ENCODE measurements at regions of chr2 and their contacts with region 1.

Region 1: GRCh38 chr2:27428213-27428977 is at the start of gene NRBP1:
- DNase-seq: peak; percentile 89
- H3K4me3 ChIP-seq: peak within 1 kb of the TSS; percentile 86 to 100 (median 92)
- H3K27ac ChIP-seq: peak within 1 kb of the TSS; percentile 86
- H3K4me1 ChIP-seq: peaks cover 14% of the 10 kb centered on the region
- H3K27me3 ChIP-seq: no peaks in the 10 kb centered on the region
- CTCF ChIP-seq: peak in 1 of 2 donors; percentile 5
- total RNA-seq, gene NRBP1: 92.9 to 93.4 TPM

Region 2: GRCh38 chr2:27380626-27381545 is 47.5 kb before region 1 on chr2 and contains the start of gene ZNF513:
- CTCF ChIA-PET with region 1: no interaction called
- dilution Hi-C with region 1: no loop called
- in situ Hi-C with region 1: no loop called
- intact Hi-C with region 1: no loop called
- DNase-seq: peak; percentile 96
- H3K4me3 ChIP-seq: peak within 1 kb of the TSS; percentile 66 to 87 (median 75)
- H3K27ac ChIP-seq: peak within 1 kb of the TSS; percentile 86
- H3K4me1 ChIP-seq: peaks cover 33% of the 10 kb centered on the region
- H3K27me3 ChIP-seq: no peaks in the 10 kb centered on the region
- CTCF ChIP-seq: no peak
- total RNA-seq, gene ZNF513: 10.2 to 14.9 TPM

Region 3: DNA sequence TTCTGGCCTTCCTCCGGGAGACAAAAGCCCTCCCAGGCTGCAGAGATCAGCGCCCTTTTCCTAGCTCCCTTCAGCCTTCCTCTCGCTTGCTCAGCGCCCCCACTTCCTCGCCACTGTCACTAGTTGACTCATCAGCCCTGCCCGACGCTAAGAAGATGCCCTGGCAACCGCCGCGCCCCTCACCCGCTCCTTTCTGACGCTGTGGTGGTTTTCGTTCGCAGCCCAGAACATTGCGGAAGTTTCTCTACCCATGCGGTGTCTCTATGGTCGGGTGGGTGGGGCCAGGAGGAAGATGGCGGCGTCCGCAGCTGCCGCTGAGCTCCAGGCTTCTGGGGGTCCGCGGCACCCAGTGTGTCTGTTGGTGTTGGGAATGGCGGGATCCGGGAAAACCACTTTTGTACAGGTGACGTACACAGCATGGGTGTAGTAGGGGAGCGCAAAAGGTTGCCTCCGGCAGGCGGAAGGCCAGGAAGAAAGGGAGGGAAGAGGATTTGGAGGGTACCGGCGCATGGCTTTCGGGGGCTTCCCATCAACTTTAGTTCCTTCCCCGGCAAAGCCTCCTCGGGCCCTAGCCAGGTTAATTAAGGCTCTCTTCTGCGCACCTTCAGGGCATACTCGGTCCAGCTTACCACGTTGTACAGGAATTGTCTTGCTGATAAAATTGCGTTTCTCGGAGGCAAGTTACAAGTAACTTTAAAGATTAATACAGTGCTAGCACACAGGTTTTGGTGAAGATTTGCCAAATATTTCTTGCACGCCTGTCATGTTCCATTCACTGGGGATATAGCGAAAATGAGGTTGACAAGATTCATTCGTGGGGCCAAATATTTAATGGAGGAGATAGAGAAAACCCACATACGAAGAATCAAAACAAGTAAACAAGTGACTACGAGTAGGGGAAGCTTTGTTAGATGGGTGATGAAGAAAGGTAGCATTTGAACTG is 200.6 kb after region 1 on chr2 and contains the starts of genes CCDC121 and GPN1:
- CTCF ChIA-PET with region 1: interaction called, 15 read pairs
- dilution Hi-C with region 1: no loop called
- in situ Hi-C with region 1: loop called (anchors 25 kb)
- intact Hi-C with region 1: loop called (anchors 2 kb)
- DNase-seq: peak; percentile 93
- H3K4me3 ChIP-seq: peak within 1 kb of the TSS; percentile 56 to 90 (median 70)
- H3K27ac ChIP-seq: peak within 1 kb of the TSS; percentile 90
- H3K4me1 ChIP-seq: peaks cover 23% of the 10 kb centered on the region
- H3K27me3 ChIP-seq: no peaks in the 10 kb centered on the region
- CTCF ChIP-seq: no peak
- total RNA-seq, gene CCDC121: 1.2 to 1.9 TPM
- total RNA-seq, gene GPN1: 42.9 to 46.8 TPM

Region 4: GRCh38 chr2:27663463-27664249 is 235.3 kb after region 1 on chr2 and contains the starts of genes SLC4A1AP and SUPT7L:
- CTCF ChIA-PET with region 1: no interaction called
- dilution Hi-C with region 1: no loop called
- in situ Hi-C with region 1: no loop called
- intact Hi-C with region 1: loop called (anchors 2 kb)
- DNase-seq: peak; percentile 85
- H3K4me3 ChIP-seq: peak within 1 kb of the TSS; percentile 70 to 82 (median 77)
- H3K27ac ChIP-seq: peak within 1 kb of the TSS; percentile 87
- H3K4me1 ChIP-seq: peaks cover 20% of the 10 kb centered on the region
- H3K27me3 ChIP-seq: no peaks in the 10 kb centered on the region
- CTCF ChIP-seq: peak in 1 of 2 donors; percentile 17
- total RNA-seq, gene SLC4A1AP: 23.8 to 26.1 TPM
- total RNA-seq, gene SUPT7L: 31.2 to 46.2 TPM

Measured in mammary epithelial cell (primary cell).